Ascending aorta (tissue), 2 donors: ENCODE measurements at regions of chr6 and their contacts with region 1.

Region 1: GRCh38 chr6:85923013-85923430 is 280.3 kb upstream of the SYNCRIP start:
- DNase-seq: peak in 1 of 2 donors; percentile 62
- H3K4me3 ChIP-seq: no peak overlapping the region
- H3K27ac ChIP-seq: no peak overlapping the region
- H3K4me1 ChIP-seq: no peaks in the 10 kb centered on the region
- H3K27me3 ChIP-seq: no peaks in the 10 kb centered on the region
- CTCF ChIP-seq: peak; percentile 21 to 67 (median 56)

Region 2: DNA sequence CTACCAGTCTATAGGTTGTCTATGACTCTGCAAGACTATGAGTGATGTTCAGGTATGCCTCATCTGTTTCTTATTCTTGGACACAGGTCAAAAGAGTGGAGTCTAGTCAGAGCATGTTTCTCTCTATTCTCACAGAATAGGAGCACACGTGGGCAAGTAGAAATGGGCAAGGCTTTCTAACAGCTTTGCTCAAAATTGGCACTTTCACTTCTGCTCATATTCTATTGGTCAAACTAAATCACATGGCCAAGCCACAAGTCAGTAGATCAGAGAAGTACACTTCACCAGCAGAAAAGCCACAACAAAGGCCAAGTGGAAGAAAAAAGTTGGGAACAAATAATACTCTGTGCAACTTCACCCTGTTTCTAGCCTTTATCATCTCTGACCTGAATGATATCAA is 74.2 kb after region 1 on chr6:
- intact Hi-C with region 1: no loop called
- DNase-seq: no peak
- H3K4me3 ChIP-seq: no peak overlapping the region
- H3K27ac ChIP-seq: no peak overlapping the region
- H3K4me1 ChIP-seq: no peaks in the 10 kb centered on the region
- H3K27me3 ChIP-seq: no peaks in the 10 kb centered on the region
- CTCF ChIP-seq: no peak

Region 3: GRCh38 chr6:86148586-86148985 is 225.6 kb after region 1 on chr6:
- intact Hi-C with region 1: no loop called
- DNase-seq: no peak
- H3K4me3 ChIP-seq: no peak overlapping the region
- H3K27ac ChIP-seq: no peak overlapping the region
- H3K4me1 ChIP-seq: peaks cover 0 to 4% of the 10 kb centered on the region in 2 donors
- H3K27me3 ChIP-seq: no peaks in the 10 kb centered on the region
- CTCF ChIP-seq: no peak

Region 4: DNA sequence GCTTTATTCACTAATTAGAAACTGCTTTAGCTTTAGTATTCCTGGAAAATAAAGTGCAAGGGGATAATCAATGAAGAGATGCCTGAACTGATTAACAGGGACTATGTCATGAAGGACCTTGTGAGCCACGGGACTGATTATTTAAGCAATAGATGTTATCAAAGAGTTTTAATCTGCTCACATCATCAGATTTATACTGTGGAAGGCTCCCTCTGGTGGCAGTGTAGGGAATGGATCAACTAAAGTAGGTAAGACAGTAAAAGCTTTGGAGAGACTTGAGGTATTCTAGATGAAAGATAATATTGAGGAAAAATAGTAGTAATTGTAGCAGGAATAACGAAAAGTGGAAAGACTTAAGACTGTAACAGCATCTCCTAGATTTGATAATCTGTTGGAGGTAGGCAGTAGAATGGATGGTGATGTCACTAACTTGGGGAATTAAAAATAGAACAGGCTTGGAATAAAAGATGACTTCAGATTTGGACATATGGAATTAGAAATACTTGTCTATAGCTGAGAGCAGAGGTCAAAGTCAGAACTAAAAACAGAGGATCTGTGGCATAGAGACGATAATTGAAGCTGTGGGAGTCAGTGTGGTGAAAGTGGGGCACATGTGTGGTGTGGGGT is 934.0 kb after region 1 on chr6:
- intact Hi-C with region 1: loop called (anchors 5 kb)
- DNase-seq: no peak
- H3K4me3 ChIP-seq: no peak overlapping the region
- H3K27ac ChIP-seq: no peak overlapping the region
- H3K4me1 ChIP-seq: no peaks in the 10 kb centered on the region
- H3K27me3 ChIP-seq: no peaks in the 10 kb centered on the region
- CTCF ChIP-seq: peak in 2 of 3 experiments; percentile 34 to 48

Region 5: DNA sequence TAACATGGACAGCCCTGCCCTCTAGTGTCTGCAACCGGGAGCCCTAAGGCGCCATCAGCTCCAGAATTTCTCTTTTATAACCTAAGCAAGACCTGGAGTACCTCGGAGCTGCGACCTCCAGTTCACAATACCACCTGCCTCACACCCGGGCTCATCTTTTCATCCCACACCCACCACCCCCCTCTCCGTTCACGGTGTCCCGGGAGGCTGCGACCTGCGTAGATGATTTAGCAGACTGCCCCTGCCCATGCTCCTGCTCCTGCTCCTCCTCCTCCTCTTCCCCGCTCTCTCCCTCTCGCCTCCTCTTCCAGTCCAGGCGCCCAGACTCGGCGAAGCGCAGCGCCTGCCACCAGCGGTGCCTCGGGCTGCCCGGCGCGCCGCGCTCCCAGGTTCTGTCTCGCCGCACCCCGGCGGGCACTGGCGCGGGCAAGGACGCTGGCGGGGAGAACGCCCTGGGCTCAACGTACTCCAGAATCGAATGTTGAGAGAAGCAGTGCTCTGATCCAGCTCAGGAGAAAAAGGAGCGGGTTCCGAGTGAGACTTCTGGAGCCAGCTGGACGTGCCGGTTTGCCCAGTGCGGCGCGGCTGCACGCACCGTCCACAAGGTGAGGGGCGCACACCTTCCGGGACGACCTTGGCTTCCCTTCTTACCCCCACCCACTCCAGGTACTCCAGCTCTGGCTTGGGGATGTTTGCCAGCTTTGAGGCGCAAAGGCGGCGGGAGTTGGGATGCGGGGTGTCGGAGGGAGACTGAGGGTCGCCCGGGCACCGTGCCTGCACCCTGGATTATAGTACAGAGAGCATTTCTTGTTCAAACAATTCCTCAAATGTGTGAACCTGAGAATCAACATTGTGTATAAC is 1014.4 kb after region 1 on chr6 and contains the start of gene HTR1E:
- intact Hi-C with region 1: loop called (anchors 1 kb)
- DNase-seq: no peak
- H3K4me3 ChIP-seq: peak within 1 kb of the TSS; percentile 40 to 50
- H3K27ac ChIP-seq: no peak within 1 kb of the TSS
- H3K4me1 ChIP-seq: no peaks in the 10 kb centered on the region
- H3K27me3 ChIP-seq: no peaks in the 10 kb centered on the region
- CTCF ChIP-seq: peak in 2 of 3 experiments; percentile 32 to 42
- total RNA-seq, gene HTR1E: not detected

Region 6: GRCh38 chr6:87029711-87030314 is 1106.8 kb after region 1 on chr6:
- intact Hi-C with region 1: loop called (anchors 5 kb)
- DNase-seq: no peak
- H3K4me3 ChIP-seq: no peak overlapping the region
- H3K27ac ChIP-seq: no peak overlapping the region
- H3K4me1 ChIP-seq: no peaks in the 10 kb centered on the region
- H3K27me3 ChIP-seq: no peaks in the 10 kb centered on the region
- CTCF ChIP-seq: peak in 2 of 3 experiments; percentile 5 to 32